WTC11 (cell line): ENCODE measurements at regions of chr17 and their contacts with region 1.

Region 1: DNA sequence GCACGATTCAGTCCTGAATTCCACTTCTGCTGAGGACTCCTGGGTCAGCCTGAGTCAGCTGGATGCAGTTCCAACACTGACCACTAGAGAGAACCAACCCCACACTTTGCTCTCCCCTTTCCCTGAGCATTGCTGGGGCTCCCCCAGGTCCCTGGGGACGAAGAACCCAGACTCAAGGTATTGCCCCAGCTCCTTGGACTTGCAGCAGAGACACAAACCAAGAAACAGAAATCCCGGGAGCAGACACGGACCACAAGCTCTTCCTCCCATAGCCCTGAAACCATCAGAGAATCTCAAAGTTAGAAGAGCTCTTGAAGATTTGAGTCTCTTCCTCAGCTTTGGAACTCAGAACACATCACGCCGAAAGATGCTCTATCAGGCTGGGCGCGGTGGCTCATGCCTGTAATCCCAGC is 678 bp upstream of the GH1 start:
- DNase-seq: peak; percentile 81
- ATAC-seq: peak; percentile 95
- H3K4me3 Mint-ChIP-seq: peak overlapping the region; percentile 46; the same call in 1 of the 2 replicates
- H3K27ac Mint-ChIP-seq: no peak overlapping the region
- H3K4me1 Mint-ChIP-seq: peaks cover 16% of the 10 kb centered on the region
- H3K27me3 Mint-ChIP-seq: peaks cover 3% of the 10 kb centered on the region; the same call in 1 of the 2 replicates
- CTCF ChIP-seq: peak; percentile 97

Region 2: GRCh38 chr17:63904316-63904715 is 15.0 kb before region 1 on chr17:
- CTCF ChIA-PET with region 1: interaction called, 28 read pairs
- POLR2A ChIA-PET with region 1: no interaction called
- DNase-seq: no peak
- ATAC-seq: no peak
- H3K4me3 Mint-ChIP-seq: no peak overlapping the region
- H3K27ac Mint-ChIP-seq: no peak overlapping the region
- H3K4me1 Mint-ChIP-seq: peaks cover 18% of the 10 kb centered on the region
- H3K27me3 Mint-ChIP-seq: peaks cover 6% of the 10 kb centered on the region; the same call in 1 of the 2 replicates
- CTCF ChIP-seq: no peak

Region 3: DNA sequence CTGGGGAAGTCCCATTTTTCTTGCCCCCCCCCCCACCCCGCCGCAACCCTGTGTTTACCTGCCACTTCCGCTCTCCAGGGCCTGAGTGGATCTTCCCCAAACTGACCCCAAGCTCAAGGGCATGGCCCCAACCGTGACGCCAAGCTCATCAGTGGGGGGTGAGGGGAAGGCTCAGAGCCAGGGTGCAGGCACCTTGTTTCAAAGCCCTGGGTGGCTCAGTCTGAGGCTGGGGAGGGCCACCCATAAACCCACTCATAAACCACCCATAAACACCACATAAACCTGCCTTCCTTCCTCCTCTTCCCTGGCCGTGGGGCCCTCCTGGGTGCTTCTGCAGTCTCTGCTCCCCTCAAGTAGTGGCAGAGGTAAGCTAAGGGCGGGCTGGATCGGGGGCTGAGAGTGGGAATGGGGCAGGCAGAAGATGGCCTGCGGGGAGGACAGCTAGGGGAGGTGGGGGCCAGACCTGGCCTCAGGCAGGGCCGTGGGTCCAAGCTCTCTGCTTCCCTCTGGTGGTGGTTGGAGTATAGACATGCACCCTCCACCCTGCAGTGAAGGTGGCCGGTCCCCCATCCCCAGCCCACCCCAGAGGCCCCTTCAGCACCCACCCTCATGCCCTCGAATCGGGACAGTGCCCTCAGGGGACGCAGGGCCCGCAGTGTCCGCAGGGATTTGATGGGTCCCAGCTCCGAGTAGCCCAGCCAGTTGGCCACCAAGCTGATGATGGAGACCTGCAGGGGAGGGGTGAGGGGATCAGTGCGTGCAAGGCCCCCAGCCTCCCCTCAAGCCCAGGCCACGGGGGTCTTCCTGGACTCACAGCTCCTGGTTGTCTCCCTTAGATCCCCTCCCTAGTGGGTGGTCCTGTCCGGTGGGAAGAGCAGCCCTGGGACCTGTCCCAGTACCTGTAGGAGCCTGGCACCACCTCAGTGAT is 27.4 kb after region 1 on chr17:
- CTCF ChIA-PET with region 1: interaction called, 170 read pairs
- POLR2A ChIA-PET with region 1: interaction called, 4 read pairs
- DNase-seq: peak; percentile 73
- ATAC-seq: peak; percentile 80
- H3K4me3 Mint-ChIP-seq: no peak overlapping the region
- H3K27ac Mint-ChIP-seq: no peak overlapping the region
- H3K4me1 Mint-ChIP-seq: peaks cover 6% of the 10 kb centered on the region; the same call in 1 of the 2 replicates
- H3K27me3 Mint-ChIP-seq: no peaks in the 10 kb centered on the region
- CTCF ChIP-seq: peak; percentile 82

Region 4: DNA sequence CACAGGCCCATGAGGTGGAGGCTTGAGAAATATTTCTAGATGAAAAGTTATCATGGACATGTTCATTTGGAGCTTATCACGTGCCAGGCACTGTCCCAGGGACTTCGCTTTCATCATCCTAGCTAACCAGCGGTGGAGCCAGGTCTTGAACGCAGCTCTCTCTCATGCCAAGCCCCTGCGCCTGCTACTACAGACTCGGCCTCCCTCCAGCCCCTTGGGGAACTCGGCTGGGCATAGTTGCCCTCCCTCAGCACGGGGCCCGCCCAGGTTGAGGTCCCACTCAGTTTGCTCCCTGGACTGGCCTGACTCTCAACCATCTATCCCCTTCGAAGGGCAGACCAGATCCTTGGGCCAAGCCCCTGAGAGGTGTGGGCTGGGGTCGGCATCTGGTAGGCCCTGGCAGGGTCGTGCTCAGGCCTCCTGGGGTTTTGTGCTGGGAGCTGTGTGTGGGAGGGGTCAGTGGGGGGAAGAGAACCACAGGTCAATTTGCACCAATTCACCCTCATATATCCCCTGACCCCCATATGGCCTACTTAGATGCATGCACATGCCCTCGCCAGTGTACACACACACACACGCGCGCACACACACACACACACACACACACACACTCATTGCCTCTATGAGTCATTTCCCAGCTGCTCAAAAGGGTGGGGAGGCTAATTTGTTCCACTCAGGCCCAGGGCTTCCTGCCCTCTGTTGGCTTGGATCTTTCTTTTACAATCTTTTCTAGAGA is 65.5 kb after region 1 on chr17:
- CTCF ChIA-PET with region 1: interaction called, 88 read pairs
- POLR2A ChIA-PET with region 1: no interaction called
- DNase-seq: no peak
- ATAC-seq: no peak
- H3K4me3 Mint-ChIP-seq: no peak overlapping the region
- H3K27ac Mint-ChIP-seq: no peak overlapping the region
- H3K4me1 Mint-ChIP-seq: peaks cover 15% of the 10 kb centered on the region
- H3K27me3 Mint-ChIP-seq: peaks cover 4% of the 10 kb centered on the region; the same call in 1 of the 2 replicates
- CTCF ChIP-seq: no peak

Region 5: DNA sequence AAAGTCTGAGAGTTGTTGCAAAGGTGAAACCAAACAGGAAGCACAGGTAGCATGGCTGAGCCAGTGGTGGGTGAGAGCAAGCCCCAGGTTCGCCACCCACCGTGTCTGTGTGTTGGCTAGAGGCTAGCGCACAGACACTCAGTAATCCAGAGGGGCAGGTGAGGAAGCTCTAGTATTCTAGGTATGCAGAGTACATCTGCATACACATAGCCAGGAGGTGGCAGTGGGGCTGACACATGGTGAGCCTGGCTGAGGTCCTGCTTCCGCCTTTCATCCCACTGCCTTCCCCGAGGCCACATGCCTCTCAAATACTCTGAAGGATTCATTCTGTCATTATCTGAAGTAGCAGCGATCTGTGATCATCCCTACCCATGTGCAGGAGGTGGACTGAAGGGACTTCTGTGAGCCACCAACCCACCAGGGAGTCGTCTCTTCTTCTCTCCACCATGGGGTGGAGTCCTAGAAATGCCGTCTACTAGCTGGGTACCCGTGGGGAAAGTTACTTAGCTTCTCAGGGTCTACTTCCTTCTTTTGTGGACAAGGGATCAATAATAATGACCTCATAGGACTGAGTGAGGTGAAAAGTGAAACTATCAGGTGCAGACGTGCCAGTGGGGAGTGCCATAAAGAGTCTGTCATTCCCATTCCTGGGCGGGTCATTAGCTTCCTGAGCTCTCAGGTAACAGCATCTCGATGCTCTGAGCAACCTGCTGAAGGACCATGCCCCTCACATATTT is 137.1 kb after region 1 on chr17:
- CTCF ChIA-PET with region 1: interaction called, 10 read pairs
- POLR2A ChIA-PET with region 1: no interaction called
- DNase-seq: peak; percentile 63
- ATAC-seq: peak; percentile 99
- H3K4me3 Mint-ChIP-seq: no peak overlapping the region
- H3K27ac Mint-ChIP-seq: peak overlapping the region; percentile 69; the same call in 1 of the 2 replicates
- H3K4me1 Mint-ChIP-seq: peaks cover 21% of the 10 kb centered on the region
- H3K27me3 Mint-ChIP-seq: no peaks in the 10 kb centered on the region
- CTCF ChIP-seq: no peak